ENCODE measurements at regions of chr4 and their contacts with region 1.

Region 1: DNA sequence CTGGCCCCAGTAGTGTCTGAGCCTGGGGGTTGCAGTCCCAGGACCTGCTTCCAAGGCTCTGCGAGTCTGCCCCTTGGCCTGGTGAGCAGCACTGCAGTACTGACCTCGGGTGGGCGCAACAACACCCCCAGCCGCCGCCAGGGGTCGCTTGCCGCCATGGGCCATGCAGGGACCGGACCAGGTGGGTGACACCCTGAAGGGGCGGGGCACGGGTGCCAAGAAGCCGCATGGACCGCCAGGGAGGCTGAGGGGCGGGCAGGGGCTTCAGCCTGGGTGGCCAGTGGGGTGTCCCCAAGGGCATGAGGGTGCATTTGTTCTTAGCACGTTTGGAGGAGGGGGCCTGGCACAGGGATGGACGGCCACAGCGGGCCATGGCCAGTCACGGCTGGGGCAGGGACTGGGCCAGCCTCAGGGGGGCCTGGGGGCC is 25.0 kb downstream of the TACC3 start:
- DNase-seq: peak; percentile 85 to 100
- H3K4me3 ChIP-seq: no peak overlapping the region
- H3K27ac ChIP-seq: no peak overlapping the region
- H3K4me1 ChIP-seq: peaks cover 0 to 8% (median 5%) of the 10 kb centered on the region in 4 experiments; a peak in 6 of 7 replicates
- H3K27me3 ChIP-seq: peaks cover 0 to 4% (median 0%) of the 10 kb centered on the region in 4 experiments; a peak in 2 of 7 replicates
- CTCF ChIP-seq: peak in 2 of 3 experiments; percentile 98 to 99; a peak in 3 of 4 replicates
- EP300 ChIP-seq: no peak
- POLR2A ChIP-seq: no peak
- RAD21 ChIP-seq: peak; percentile 83 to 90

Region 2: GRCh38 chr4:1693129-1693896 is 53.0 kb before region 1 on chr4:
- CTCF ChIA-PET with region 1: interaction called, 16 read pairs
- POLR2A ChIA-PET with region 1: no interaction called
- DNase-seq: peak in 1 of 2 experiments; percentile 75
- H3K4me3 ChIP-seq: no peak overlapping the region
- H3K27ac ChIP-seq: no peak overlapping the region
- H3K4me1 ChIP-seq: no peaks in the 10 kb centered on the region
- H3K27me3 ChIP-seq: no peaks in the 10 kb centered on the region
- CTCF ChIP-seq: peak in 2 of 3 experiments; percentile 91 to 98; a peak in 3 of 4 replicates
- EP300 ChIP-seq: no peak
- POLR2A ChIP-seq: no peak
- RAD21 ChIP-seq: peak; percentile 67 to 73

Region 3: DNA sequence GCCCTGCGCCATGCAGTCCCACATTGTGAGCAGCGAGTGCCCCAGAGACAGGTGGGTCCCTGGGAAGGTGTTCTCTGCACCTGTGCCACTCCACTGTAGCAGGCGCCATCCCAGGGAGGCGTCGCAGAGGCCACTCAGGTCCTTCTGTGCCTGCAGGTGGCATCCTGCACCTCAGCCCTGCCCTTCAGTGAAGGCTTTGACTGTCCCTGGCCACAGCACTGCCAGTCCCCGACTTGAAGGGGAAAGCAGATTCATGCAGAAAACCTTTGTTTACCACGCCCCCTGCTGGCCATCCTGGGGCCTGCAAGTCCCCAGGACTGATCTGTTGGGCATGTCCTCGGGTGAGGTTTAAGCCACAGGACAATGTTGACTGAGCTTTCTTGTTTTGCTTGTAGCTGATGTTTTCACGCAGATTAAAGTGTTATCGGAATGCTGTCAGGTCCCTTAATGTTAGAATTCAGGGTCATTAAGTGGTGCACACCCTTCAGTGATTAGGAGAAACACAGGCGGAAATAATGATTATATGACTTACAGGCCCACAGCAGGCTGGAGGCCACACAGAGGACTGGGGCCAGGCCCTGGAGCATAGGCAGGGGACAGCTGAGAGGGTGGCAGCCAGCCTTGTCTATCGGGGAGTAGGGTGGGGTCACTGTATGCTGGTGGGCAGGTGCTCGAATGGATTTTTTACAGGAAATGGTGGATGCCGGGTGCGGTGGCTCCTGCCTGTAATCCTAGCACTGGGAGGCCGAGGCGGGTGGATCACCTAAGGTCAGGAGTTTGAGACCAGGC is 19.9 kb before region 1 on chr4:
- CTCF ChIA-PET with region 1: interaction called, 32 read pairs
- POLR2A ChIA-PET with region 1: interaction called, 21 read pairs
- DNase-seq: peak; percentile 79 to 99
- H3K4me3 ChIP-seq: no peak overlapping the region
- H3K27ac ChIP-seq: no peak overlapping the region
- H3K4me1 ChIP-seq: peaks cover 0 to 12% (median 5%) of the 10 kb centered on the region in 4 experiments; a peak in 6 of 7 replicates
- H3K27me3 ChIP-seq: no peaks in the 10 kb centered on the region
- CTCF ChIP-seq: peak in 2 of 3 experiments; percentile 82 to 98; a peak in 3 of 4 replicates
- EP300 ChIP-seq: no peak
- POLR2A ChIP-seq: no peak
- RAD21 ChIP-seq: peak; percentile 56 to 65

Region 4: GRCh38 chr4:1802151-1802715 is 56.0 kb after region 1 on chr4:
- CTCF ChIA-PET with region 1: interaction called, 2,507 read pairs
- POLR2A ChIA-PET with region 1: interaction called, 15 read pairs
- DNase-seq: no peak
- H3K4me3 ChIP-seq: no peak overlapping the region
- H3K27ac ChIP-seq: no peak overlapping the region
- H3K4me1 ChIP-seq: no peaks in the 10 kb centered on the region; a peak in 1 of 7 replicates
- H3K27me3 ChIP-seq: no peaks in the 10 kb centered on the region
- CTCF ChIP-seq: no peak
- EP300 ChIP-seq: no peak
- POLR2A ChIP-seq: no peak
- RAD21 ChIP-seq: no peak

Region 5: GRCh38 chr4:1834047-1834775 is 87.9 kb after region 1 on chr4:
- CTCF ChIA-PET with region 1: interaction called, 15 read pairs
- POLR2A ChIA-PET with region 1: no interaction called
- DNase-seq: no peak
- H3K4me3 ChIP-seq: no peak overlapping the region
- H3K27ac ChIP-seq: no peak overlapping the region
- H3K4me1 ChIP-seq: peaks cover 0 to 4% (median 1%) of the 10 kb centered on the region in 4 experiments; a peak in 4 of 7 replicates
- H3K27me3 ChIP-seq: no peaks in the 10 kb centered on the region
- CTCF ChIP-seq: no peak
- EP300 ChIP-seq: no peak
- POLR2A ChIP-seq: no peak
- RAD21 ChIP-seq: no peak

Region 6: GRCh38 chr4:1890979-1891570 is 144.8 kb after region 1 on chr4:
- CTCF ChIA-PET with region 1: no interaction called
- POLR2A ChIA-PET with region 1: no interaction called
- DNase-seq: no peak
- H3K4me3 ChIP-seq: no peak overlapping the region
- H3K27ac ChIP-seq: no peak overlapping the region
- H3K4me1 ChIP-seq: no peaks in the 10 kb centered on the region
- H3K27me3 ChIP-seq: no peaks in the 10 kb centered on the region
- CTCF ChIP-seq: no peak
- EP300 ChIP-seq: no peak
- POLR2A ChIP-seq: no peak
- RAD21 ChIP-seq: no peak

Region 7: GRCh38 chr4:1910643-1911042 is 164.4 kb after region 1 on chr4:
- CTCF ChIA-PET with region 1: interaction called, 15 read pairs
- POLR2A ChIA-PET with region 1: no interaction called
- DNase-seq: peak; percentile 21 to 64
- H3K4me3 ChIP-seq: no peak overlapping the region
- H3K27ac ChIP-seq: peak overlapping the region; percentile 24; the same call in 1 of the 2 replicates
- H3K4me1 ChIP-seq: no peaks in the 10 kb centered on the region
- H3K27me3 ChIP-seq: no peaks in the 10 kb centered on the region
- CTCF ChIP-seq: peak; percentile 51 to 78 (median 68)
- EP300 ChIP-seq: no peak
- POLR2A ChIP-seq: no peak
- RAD21 ChIP-seq: peak; percentile 75

Measured in H1 (cell line).